WTC11 (cell line): ENCODE measurements at regions of chr17 and their contacts with region 1.

Region 1: DNA sequence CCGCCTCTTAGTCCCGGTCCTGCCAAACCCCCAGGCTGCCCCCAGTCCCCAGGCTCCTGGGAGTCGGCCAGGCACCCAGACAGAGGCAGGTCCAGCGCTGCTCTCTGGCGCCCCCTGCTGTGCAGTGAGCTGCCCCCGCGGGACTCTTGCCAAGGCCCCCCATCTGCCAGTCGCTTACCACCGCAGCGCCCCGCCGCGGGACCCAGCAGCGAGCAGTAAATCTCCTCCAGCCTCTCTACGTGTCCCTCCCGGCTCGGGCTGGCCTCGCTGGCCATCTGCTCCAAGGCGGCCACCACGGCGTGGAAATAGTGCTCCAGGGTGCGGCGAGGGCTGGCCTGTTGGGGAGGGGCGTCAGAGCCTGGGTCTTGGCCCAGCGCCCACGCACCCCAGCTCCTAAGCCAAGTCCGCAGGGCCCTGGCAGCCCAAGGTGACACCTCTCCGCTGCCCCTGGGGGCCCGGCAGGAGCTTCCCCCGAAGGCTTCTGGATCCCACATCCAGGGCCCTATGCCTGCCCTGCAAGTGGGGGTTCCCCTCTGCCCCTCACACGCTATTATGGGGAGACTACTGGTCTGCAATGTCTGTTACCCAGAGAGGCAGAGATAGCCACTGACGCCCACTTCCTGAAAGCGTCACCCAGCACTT is 33.7 kb upstream of the MFSD6L start:
- DNase-seq: peak; percentile 87
- ATAC-seq: peak; percentile 75
- H3K4me3 Mint-ChIP-seq: no peak overlapping the region
- H3K27ac Mint-ChIP-seq: no peak overlapping the region
- H3K4me1 Mint-ChIP-seq: peaks cover 9% of the 10 kb centered on the region
- H3K27me3 Mint-ChIP-seq: no peaks in the 10 kb centered on the region
- CTCF ChIP-seq: peak; percentile 79

Region 2: GRCh38 chr17:8785547-8786413 is 47.1 kb before region 1 on chr17:
- CTCF ChIA-PET with region 1: interaction called, 12 read pairs
- POLR2A ChIA-PET with region 1: no interaction called
- DNase-seq: peak; percentile 97
- ATAC-seq: peak; percentile 97
- H3K4me3 Mint-ChIP-seq: no peak overlapping the region
- H3K27ac Mint-ChIP-seq: no peak overlapping the region
- H3K4me1 Mint-ChIP-seq: peaks cover 19% of the 10 kb centered on the region
- H3K27me3 Mint-ChIP-seq: no peaks in the 10 kb centered on the region; the same call in 1 of the 2 replicates
- CTCF ChIP-seq: peak; percentile 87

Region 3: GRCh38 chr17:8820311-8821010 is 12.4 kb before region 1 on chr17:
- CTCF ChIA-PET with region 1: interaction called, 12 read pairs
- POLR2A ChIA-PET with region 1: interaction called, 3 read pairs
- DNase-seq: no peak
- ATAC-seq: no peak
- H3K4me3 Mint-ChIP-seq: no peak overlapping the region
- H3K27ac Mint-ChIP-seq: no peak overlapping the region
- H3K4me1 Mint-ChIP-seq: 0 out of 2 replicates have a peak, but pooled peaks cover 2% of the 10 kb centered on the region
- H3K27me3 Mint-ChIP-seq: no peaks in the 10 kb centered on the region; the same call in 1 of the 2 replicates
- CTCF ChIP-seq: no peak

Region 4: GRCh38 chr17:8849311-8850041 is 16.6 kb after region 1 on chr17:
- CTCF ChIA-PET with region 1: interaction called, 12 read pairs
- POLR2A ChIA-PET with region 1: no interaction called
- DNase-seq: no peak
- ATAC-seq: no peak
- H3K4me3 Mint-ChIP-seq: no peak overlapping the region
- H3K27ac Mint-ChIP-seq: no peak overlapping the region
- H3K4me1 Mint-ChIP-seq: peaks cover 7% of the 10 kb centered on the region
- H3K27me3 Mint-ChIP-seq: no peaks in the 10 kb centered on the region
- CTCF ChIP-seq: no peak

Region 5: GRCh38 chr17:8875957-8876356 is 43.1 kb after region 1 on chr17:
- CTCF ChIA-PET with region 1: interaction called, 11 read pairs
- POLR2A ChIA-PET with region 1: no interaction called
- DNase-seq: no peak
- ATAC-seq: peak; percentile 25; the same call in 1 of the 2 replicates
- H3K4me3 Mint-ChIP-seq: no peak overlapping the region
- H3K27ac Mint-ChIP-seq: no peak overlapping the region
- H3K4me1 Mint-ChIP-seq: peaks cover 33% of the 10 kb centered on the region
- H3K27me3 Mint-ChIP-seq: no peaks in the 10 kb centered on the region
- CTCF ChIP-seq: no peak

Region 6: GRCh38 chr17:8894673-8895578 is 62.1 kb after region 1 on chr17:
- CTCF ChIA-PET with region 1: interaction called, 34 read pairs
- POLR2A ChIA-PET with region 1: no interaction called
- DNase-seq: peak; percentile 66
- ATAC-seq: peak; percentile 82
- H3K4me3 Mint-ChIP-seq: peak overlapping the region; percentile 70
- H3K27ac Mint-ChIP-seq: no peak overlapping the region
- H3K4me1 Mint-ChIP-seq: peaks cover 17% of the 10 kb centered on the region
- H3K27me3 Mint-ChIP-seq: peaks cover 3% of the 10 kb centered on the region; the same call in 1 of the 2 replicates
- CTCF ChIP-seq: peak; percentile 74

Region 7: DNA sequence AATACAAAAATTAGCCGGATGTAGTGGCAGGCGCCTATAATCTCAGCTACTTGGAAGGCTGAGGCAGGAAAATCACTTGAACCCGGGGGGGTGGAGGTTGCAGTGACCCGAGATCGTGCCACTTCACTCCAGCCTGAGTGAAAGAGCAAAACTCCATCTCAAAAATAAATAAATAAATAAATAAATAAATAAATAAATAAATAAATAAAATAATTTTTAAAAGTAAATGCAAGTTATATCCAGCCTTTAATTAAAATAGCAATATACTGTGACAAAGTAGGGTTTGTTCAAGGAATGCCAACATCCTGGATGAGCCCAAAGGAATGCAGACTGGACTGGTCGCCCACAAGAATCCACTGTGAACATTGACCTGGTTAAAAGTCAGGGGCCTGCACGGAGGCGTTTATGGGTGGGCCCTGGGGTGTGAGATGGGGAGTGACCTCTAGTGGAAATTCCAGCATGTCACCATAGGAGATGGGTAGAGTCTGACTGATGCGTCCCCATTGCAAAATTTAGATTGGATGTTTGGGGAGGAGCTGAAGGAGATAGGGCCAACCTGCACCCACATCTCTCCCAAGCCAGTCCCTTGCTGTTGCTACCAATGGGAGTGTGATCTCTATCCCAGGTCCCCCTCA is 142.4 kb after region 1 on chr17:
- CTCF ChIA-PET with region 1: no interaction called
- POLR2A ChIA-PET with region 1: no interaction called
- DNase-seq: no peak
- ATAC-seq: no peak; the same call in 1 of the 2 replicates
- H3K4me3 Mint-ChIP-seq: no peak overlapping the region
- H3K27ac Mint-ChIP-seq: no peak overlapping the region
- H3K4me1 Mint-ChIP-seq: no peaks in the 10 kb centered on the region
- H3K27me3 Mint-ChIP-seq: peaks cover 7% of the 10 kb centered on the region
- CTCF ChIP-seq: no peak